ENCODE measurements at regions of chr5 and their contacts with region 1.

Region 1: GRCh38 chr5:133111299-133111698 is 59.5 kb downstream of the HSPA4 start:
- DNase-seq: peak; percentile 73
- ATAC-seq: peak; percentile 53
- H3K4me3 Mint-ChIP-seq: peak overlapping the region; percentile 33
- H3K27ac Mint-ChIP-seq: peak overlapping the region; percentile 68
- H3K4me1 Mint-ChIP-seq: peaks cover 45% of the 10 kb centered on the region
- H3K27me3 Mint-ChIP-seq: no peaks in the 10 kb centered on the region
- CTCF ChIP-seq: peak; percentile 77

Region 2: GRCh38 chr5:132662925-132663770 is 448.2 kb before region 1 on chr5:
- CTCF ChIA-PET with region 1: no interaction called
- POLR2A ChIA-PET with region 1: no interaction called
- intact Hi-C with region 1: no loop called
- DNase-seq: no peak
- ATAC-seq: peak; percentile 45
- H3K4me3 Mint-ChIP-seq: no peak overlapping the region
- H3K27ac Mint-ChIP-seq: no peak overlapping the region
- H3K4me1 Mint-ChIP-seq: peaks cover 30% of the 10 kb centered on the region
- H3K27me3 Mint-ChIP-seq: no peaks in the 10 kb centered on the region
- CTCF ChIP-seq: no peak

Region 3: GRCh38 chr5:132963175-132964104 is 147.9 kb before region 1 on chr5 and contains the start of gene AFF4:
- CTCF ChIA-PET with region 1: no interaction called
- POLR2A ChIA-PET with region 1: interaction called, 3 read pairs
- intact Hi-C with region 1: loop called (anchors 1 kb)
- DNase-seq: peak; percentile 94
- ATAC-seq: peak; percentile 86
- H3K4me3 Mint-ChIP-seq: peak within 1 kb of the TSS; percentile 94
- H3K27ac Mint-ChIP-seq: peak within 1 kb of the TSS; percentile 94
- H3K4me1 Mint-ChIP-seq: peaks cover 37% of the 10 kb centered on the region
- H3K27me3 Mint-ChIP-seq: no peaks in the 10 kb centered on the region
- CTCF ChIP-seq: no peak
- total RNA-seq, gene AFF4: 42.7 and 51.8 TPM in 2 replicates

Region 4: GRCh38 chr5:133164759-133165158 is 53.5 kb after region 1 on chr5:
- CTCF ChIA-PET with region 1: no interaction called
- POLR2A ChIA-PET with region 1: no interaction called
- intact Hi-C with region 1: no loop called
- DNase-seq: no peak
- ATAC-seq: no peak
- H3K4me3 Mint-ChIP-seq: no peak overlapping the region
- H3K27ac Mint-ChIP-seq: no peak overlapping the region
- H3K4me1 Mint-ChIP-seq: peaks cover 4% of the 10 kb centered on the region
- H3K27me3 Mint-ChIP-seq: peaks cover 15% of the 10 kb centered on the region
- CTCF ChIP-seq: no peak

Region 5: DNA sequence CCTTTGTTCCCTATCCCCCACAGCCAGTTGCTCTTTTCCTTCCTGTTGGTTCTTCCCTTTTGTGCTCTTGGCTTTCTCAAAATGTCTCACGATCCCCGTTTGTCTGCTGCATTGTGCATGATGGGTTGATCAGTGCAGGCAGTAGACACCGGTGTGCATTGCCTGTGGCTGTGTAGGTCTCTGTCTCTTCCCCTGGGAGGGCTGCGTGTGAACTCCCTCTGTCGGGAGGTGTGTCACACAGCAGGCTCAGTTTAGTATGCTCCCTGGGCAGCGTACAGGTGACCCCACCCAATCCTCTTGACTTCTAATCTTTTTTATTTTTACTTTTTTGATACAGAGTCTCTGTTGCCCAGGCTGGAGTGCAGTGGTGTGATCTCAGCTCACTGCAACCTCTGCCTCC is 235.7 kb after region 1 on chr5:
- CTCF ChIA-PET with region 1: interaction called, 4 read pairs
- POLR2A ChIA-PET with region 1: no interaction called
- intact Hi-C with region 1: loop called (anchors 1 kb)
- DNase-seq: no peak
- ATAC-seq: peak; percentile 71
- H3K4me3 Mint-ChIP-seq: no peak overlapping the region
- H3K27ac Mint-ChIP-seq: no peak overlapping the region
- H3K4me1 Mint-ChIP-seq: no peaks in the 10 kb centered on the region
- H3K27me3 Mint-ChIP-seq: peaks cover 16% of the 10 kb centered on the region
- CTCF ChIP-seq: no peak

Region 6: GRCh38 chr5:133460172-133460758 is 349.0 kb after region 1 on chr5:
- CTCF ChIA-PET with region 1: interaction called, 4 read pairs
- POLR2A ChIA-PET with region 1: no interaction called
- intact Hi-C with region 1: loop called (anchors 1 kb)
- DNase-seq: peak; percentile 31
- ATAC-seq: no peak
- H3K4me3 Mint-ChIP-seq: no peak overlapping the region
- H3K27ac Mint-ChIP-seq: no peak overlapping the region
- H3K4me1 Mint-ChIP-seq: no peaks in the 10 kb centered on the region
- H3K27me3 Mint-ChIP-seq: no peaks in the 10 kb centered on the region
- CTCF ChIP-seq: no peak

Region 7: GRCh38 chr5:133944263-133945185 is 833.2 kb after region 1 on chr5:
- CTCF ChIA-PET with region 1: interaction called, 10 read pairs
- POLR2A ChIA-PET with region 1: interaction called, 3 read pairs
- intact Hi-C with region 1: loop called (anchors 1 kb)
- DNase-seq: no peak
- ATAC-seq: peak; percentile 87
- H3K4me3 Mint-ChIP-seq: no peak overlapping the region
- H3K27ac Mint-ChIP-seq: no peak overlapping the region
- H3K4me1 Mint-ChIP-seq: peaks cover 44% of the 10 kb centered on the region
- H3K27me3 Mint-ChIP-seq: no peaks in the 10 kb centered on the region
- CTCF ChIP-seq: no peak

Region 8: GRCh38 chr5:134140530-134141201 is 1029.4 kb after region 1 on chr5:
- CTCF ChIA-PET with region 1: interaction called, 4 read pairs
- POLR2A ChIA-PET with region 1: no interaction called
- intact Hi-C with region 1: loop called (anchors 2 kb)
- DNase-seq: peak; percentile 41
- ATAC-seq: peak; percentile 68
- H3K4me3 Mint-ChIP-seq: no peak overlapping the region
- H3K27ac Mint-ChIP-seq: peak overlapping the region; percentile 68
- H3K4me1 Mint-ChIP-seq: peaks cover 47% of the 10 kb centered on the region
- H3K27me3 Mint-ChIP-seq: no peaks in the 10 kb centered on the region
- CTCF ChIP-seq: peak; percentile 31